BJ (cell line): ENCODE measurements at regions of chr15 and their contacts with region 1.

Region 1: GRCh38 chr15:69394556-69395282 is 19.4 kb upstream of the KIF23 start:
- DNase-seq: no peak
- H3K4me3 ChIP-seq: no peak overlapping the region
- H3K27me3 ChIP-seq: no peaks in the 10 kb centered on the region
- CTCF ChIP-seq: peak; percentile 93

Region 2: GRCh38 chr15:69058830-69059556 is 335.7 kb before region 1 on chr15:
- CTCF ChIA-PET with region 1: interaction called, 70 read pairs
- POLR2A ChIA-PET with region 1: no interaction called
- DNase-seq: peak; percentile 22
- H3K4me3 ChIP-seq: no peak overlapping the region
- H3K27me3 ChIP-seq: no peaks in the 10 kb centered on the region
- CTCF ChIP-seq: peak; percentile 79

Region 3: GRCh38 chr15:69160141-69160993 is 234.4 kb before region 1 on chr15 and contains the start of gene GLCE:
- CTCF ChIA-PET with region 1: interaction called, 17 read pairs
- POLR2A ChIA-PET with region 1: no interaction called
- DNase-seq: peak; percentile 73
- H3K4me3 ChIP-seq: peak within 1 kb of the TSS; percentile 85
- H3K27me3 ChIP-seq: no peaks in the 10 kb centered on the region
- CTCF ChIP-seq: no peak
- polyA plus RNA-seq, gene GLCE: 7.1 and 12.5 TPM in 2 replicates

Region 4: GRCh38 chr15:69328739-69329138 is 66.0 kb before region 1 on chr15:
- CTCF ChIA-PET with region 1: no interaction called
- POLR2A ChIA-PET with region 1: no interaction called
- DNase-seq: no peak
- H3K4me3 ChIP-seq: no peak overlapping the region
- H3K27me3 ChIP-seq: no peaks in the 10 kb centered on the region
- CTCF ChIP-seq: no peak

Region 5: DNA sequence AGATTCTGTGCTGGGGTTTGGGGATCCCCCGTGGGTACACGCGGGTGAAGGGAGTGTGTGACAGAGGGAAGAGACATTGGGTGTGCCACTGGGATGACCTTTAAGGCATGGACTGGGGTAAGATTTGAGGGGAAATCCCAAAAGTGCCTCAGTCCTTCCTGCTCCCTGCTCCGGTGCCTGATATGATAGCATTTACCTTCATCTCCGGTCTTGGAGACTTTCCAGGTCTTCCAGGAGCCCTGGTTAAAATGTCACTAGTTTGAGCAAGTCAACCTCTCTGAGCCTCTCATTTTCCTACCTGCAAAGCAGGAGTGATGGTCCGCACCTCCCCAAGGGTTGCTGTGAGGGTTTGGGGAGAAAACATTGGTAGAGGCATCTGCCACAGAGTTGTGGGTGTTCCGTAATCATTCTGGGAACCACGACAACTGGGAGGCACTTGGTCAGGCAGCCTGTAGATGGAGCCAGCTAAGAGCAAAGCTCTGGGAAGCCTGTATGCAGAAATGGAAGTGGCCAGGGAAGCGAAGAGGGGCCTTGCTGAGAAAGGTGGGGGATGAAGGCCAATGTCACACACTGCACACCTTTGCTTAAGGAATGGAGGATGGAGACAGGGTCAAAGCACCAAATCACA is 14.5 kb before region 1 on chr15:
- CTCF ChIA-PET with region 1: interaction called, 32 read pairs
- POLR2A ChIA-PET with region 1: no interaction called
- DNase-seq: no peak
- H3K4me3 ChIP-seq: no peak overlapping the region
- H3K27me3 ChIP-seq: no peaks in the 10 kb centered on the region; the same call in 1 of the 2 replicates
- CTCF ChIP-seq: peak; percentile 35

Region 6: GRCh38 chr15:69413822-69414700 is 19.3 kb after region 1 on chr15 and contains the start of gene KIF23:
- CTCF ChIA-PET with region 1: interaction called, 11 read pairs
- POLR2A ChIA-PET with region 1: interaction called, 3 read pairs
- DNase-seq: peak; percentile 78
- H3K4me3 ChIP-seq: peak within 1 kb of the TSS; percentile 72
- H3K27me3 ChIP-seq: no peaks in the 10 kb centered on the region
- CTCF ChIP-seq: no peak
- polyA plus RNA-seq, gene KIF23: 33.9 and 35.2 TPM in 2 replicates

Region 7: DNA sequence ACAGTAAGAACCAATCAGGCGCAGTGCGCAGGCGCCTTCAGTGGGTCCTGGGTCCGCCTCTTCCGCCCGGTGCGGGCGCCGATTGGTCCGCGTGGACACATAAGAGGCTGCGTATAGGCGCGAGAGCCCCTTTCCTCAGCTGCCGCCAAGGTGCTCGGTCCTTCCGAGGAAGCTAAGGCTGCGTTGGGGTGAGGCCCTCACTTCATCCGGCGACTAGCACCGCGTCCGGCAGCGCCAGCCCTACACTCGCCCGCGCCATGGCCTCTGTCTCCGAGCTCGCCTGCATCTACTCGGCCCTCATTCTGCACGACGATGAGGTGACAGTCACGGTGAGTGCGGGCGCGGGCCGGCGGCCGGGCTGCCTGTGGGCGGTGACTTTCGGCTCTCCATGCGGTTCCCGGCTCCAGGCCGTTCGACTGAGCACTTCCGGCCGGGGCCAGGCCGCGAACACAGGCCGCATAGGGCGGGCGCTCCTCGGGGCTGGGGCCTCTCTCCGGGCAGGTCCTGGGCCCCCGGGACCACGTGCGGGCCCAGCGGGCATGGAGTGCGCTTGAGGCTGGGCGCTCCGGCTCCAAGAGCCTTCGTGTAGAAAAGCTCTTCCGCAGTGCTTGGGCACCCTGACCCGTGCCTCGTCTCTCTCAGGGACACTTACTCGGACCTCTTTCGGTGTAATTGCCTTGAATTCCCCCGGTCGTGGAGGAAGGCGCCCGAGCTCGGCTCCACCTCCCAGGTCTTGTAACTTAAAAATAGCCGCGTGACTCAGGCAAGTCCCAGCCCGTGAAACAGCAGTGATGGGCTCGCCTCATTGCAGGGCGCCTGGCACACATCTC is 58.2 kb after region 1 on chr15 and contains the start of gene RPLP1:
- CTCF ChIA-PET with region 1: interaction called, 13 read pairs
- POLR2A ChIA-PET with region 1: interaction called, 4 read pairs
- DNase-seq: peak; percentile 61
- H3K4me3 ChIP-seq: peak within 1 kb of the TSS; percentile 91
- H3K27me3 ChIP-seq: no peaks in the 10 kb centered on the region
- CTCF ChIP-seq: no peak
- polyA plus RNA-seq, gene RPLP1: 1,124 and 1,191 TPM in 2 replicates